Naive thymus-derived CD8-positive, alpha-beta T cell (primary cell): ENCODE measurements at regions of chr16 and their contacts with region 1.

Region 1: DNA sequence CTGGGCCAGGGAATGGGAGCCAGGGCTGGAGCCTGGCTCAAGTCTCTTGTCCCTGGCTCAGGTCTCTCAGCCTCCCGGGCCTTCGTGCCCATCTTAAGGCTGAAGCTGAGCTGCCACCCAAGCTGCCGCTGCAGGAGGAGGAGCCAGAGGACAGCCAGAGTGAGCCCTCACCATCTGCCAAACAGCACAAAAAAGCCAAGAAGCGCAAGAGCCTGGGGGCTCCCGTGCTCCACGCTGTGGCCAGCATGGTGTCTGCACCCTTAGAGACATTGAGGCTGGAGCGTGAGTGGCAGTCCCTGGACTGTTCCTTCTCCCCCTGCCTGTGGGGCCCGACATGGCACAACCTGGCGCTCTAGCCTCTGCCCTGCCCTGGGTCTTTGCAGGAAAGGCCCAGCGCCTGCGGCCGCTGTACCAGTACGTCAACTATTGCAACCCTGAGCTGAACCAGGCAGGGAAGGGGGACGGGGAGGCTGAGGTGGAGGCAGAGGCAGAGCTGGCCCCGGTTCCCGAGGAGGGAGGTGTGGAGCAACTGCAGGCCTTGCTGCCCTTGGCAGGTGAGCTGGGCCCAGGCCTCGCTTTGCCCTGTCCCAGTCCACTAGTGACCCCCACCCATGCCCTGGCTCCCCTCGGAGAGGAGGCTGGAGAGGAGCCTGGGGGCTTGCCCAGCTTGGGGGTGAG is 1.3 kb downstream of the C16orf86 start:
- DNase-seq: peak; percentile 65 to 91 (median 84)
- ATAC-seq: peak; percentile 89 to 92
- H3K4me3 Mint-ChIP-seq: peak overlapping the region; percentile 53 to 95 (median 84)
- H3K27ac Mint-ChIP-seq: peak overlapping the region in 6 of 10 donors; percentile 61 to 90 (median 79)
- H3K4me1 Mint-ChIP-seq: peaks cover 9 to 30% (median 27%) of the 10 kb centered on the region in 4 donors
- H3K27me3 Mint-ChIP-seq: no peaks in the 10 kb centered on the region

Region 2: GRCh38 chr16:67521095-67521804 is 146.7 kb before region 1 on chr16:
- POLR2A ChIA-PET with region 1: interaction called, 19 read pairs
- DNase-seq: peak; percentile 90 to 98 (median 94)
- ATAC-seq: peak; percentile 88 to 90
- H3K4me3 Mint-ChIP-seq: peak overlapping the region; percentile 86 to 96 (median 92)
- H3K27ac Mint-ChIP-seq: peak overlapping the region; percentile 84 to 99 (median 97)
- H3K4me1 Mint-ChIP-seq: peaks cover 22 to 52% (median 46%) of the 10 kb centered on the region in 4 donors
- H3K27me3 Mint-ChIP-seq: no peaks in the 10 kb centered on the region

Region 3: GRCh38 chr16:67530013-67530939 is 137.7 kb before region 1 on chr16:
- POLR2A ChIA-PET with region 1: interaction called, 12 read pairs
- DNase-seq: peak in 6 of 10 donors; percentile 14 to 78 (median 34)
- ATAC-seq: peak; percentile 48 to 63
- H3K4me3 Mint-ChIP-seq: peak overlapping the region; percentile 65 to 89 (median 84)
- H3K27ac Mint-ChIP-seq: peak overlapping the region in 7 of 10 donors; percentile 14 to 83 (median 81)
- H3K4me1 Mint-ChIP-seq: peaks cover 21 to 44% (median 30%) of the 10 kb centered on the region in 4 donors
- H3K27me3 Mint-ChIP-seq: peaks cover 0 to 24% (median 6%) of the 10 kb centered on the region in 5 donors

Region 4: DNA sequence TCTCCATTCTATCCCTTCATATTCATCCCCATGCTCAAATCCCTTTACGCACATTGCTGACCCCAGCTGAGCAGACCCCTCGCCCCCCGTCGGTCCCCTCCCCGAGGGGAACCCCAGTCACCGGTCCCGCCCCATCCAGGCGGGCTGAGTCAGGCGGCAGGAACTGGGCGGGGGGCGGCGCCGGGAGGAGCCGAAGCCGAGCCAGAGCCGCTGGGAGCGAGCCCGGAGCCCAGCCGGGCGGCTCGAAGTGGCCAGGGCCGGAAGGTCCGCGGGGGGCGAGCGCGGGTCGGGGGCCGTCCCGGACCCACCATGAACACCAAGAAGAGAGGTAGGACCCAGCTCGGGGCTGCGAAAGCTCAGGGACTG is 130.7 kb before region 1 on chr16:
- POLR2A ChIA-PET with region 1: interaction called, 17 read pairs
- DNase-seq: peak in 5 of 10 donors; percentile 36 to 54 (median 40)
- ATAC-seq: peak; percentile 44 to 47
- H3K4me3 Mint-ChIP-seq: peak overlapping the region; percentile 74 to 91 (median 85)
- H3K27ac Mint-ChIP-seq: peak overlapping the region; percentile 52 to 92 (median 84)
- H3K4me1 Mint-ChIP-seq: peaks cover 36 to 64% (median 46%) of the 10 kb centered on the region in 4 donors
- H3K27me3 Mint-ChIP-seq: no peaks in the 10 kb centered on the region

Region 5: DNA sequence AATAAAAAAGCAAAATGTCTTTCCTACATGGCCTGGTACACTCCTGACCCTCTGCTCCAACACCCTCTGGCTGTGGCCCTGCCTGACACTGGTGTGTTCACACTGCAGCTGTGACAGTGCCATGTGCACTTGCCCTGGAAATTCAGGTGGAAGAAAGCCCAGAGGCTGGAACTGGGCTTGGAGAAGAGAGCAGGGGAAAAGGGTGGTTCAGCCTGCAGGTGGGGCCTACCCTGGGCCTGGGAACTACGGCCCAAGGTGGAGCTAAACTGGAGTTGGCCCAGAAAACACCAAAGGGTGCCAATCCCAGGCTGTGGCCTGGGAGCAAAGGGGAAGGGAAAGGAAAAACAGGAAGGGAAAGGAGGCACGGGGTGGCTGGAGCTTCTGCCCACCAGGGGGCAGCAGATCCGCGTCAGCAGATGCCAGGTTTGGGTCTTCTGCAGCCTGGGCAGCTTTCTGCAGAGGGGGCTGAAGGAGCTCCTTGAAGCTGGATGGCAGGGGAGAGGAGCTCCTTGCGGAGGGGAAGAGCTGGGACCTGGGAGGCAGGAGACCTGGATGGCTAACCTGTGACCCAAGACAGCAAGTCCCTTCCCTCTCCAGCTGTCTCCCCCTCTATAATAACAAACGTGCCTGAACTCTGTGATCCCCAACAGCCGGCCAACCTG is 121.1 kb before region 1 on chr16:
- POLR2A ChIA-PET with region 1: interaction called, 41 read pairs
- DNase-seq: peak; percentile 58 to 88 (median 74)
- ATAC-seq: peak; percentile 36 to 57
- H3K4me3 Mint-ChIP-seq: peak overlapping the region; percentile 70 to 90 (median 84)
- H3K27ac Mint-ChIP-seq: peak overlapping the region; percentile 81 to 99 (median 96)
- H3K4me1 Mint-ChIP-seq: peaks cover 34 to 71% (median 60%) of the 10 kb centered on the region in 4 donors
- H3K27me3 Mint-ChIP-seq: no peaks in the 10 kb centered on the region

Region 6: DNA sequence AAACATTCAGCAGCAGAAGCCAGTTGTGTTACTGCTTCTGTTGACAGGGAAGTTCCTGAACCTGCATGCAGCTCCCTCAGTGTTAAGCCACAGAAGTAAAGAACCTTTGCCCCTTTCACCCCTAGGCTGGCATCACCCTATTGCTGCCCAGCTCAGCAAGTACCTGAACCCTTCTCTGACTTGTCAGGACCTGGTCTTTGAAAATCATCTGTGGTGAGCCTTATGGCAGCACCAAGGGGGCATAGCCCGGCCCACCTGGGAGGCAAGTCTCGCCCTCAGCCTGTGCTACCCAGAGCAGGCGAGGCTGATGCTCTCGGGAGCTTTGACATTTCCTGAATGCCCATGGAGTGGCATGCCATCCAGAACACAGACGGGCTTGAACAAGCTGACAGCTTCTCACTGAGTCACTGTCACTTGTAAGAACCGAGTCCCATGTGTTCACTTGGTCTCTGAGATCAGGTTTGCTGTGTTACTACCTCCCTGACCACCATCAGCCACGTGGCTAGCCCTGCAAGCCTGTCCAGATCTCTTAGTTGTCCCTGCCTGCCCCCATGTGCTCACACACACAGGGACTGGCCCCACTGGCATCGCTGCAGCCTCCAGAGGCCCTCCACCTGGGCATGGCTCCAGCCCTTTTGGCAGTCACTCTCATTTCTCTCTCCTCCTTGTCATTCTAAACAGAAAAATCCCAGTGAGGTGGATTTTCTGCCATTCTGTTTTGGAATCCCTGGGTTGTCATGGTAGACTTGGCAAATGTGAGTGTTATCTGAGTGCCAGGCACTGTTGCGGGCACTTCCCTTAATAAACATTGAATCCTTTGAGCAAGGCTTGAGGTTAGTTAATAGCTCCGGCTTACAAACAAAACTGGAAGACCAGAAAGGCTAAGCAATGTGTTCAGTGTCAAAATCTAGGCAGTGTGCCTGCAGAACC is 25.9 kb before region 1 on chr16:
- POLR2A ChIA-PET with region 1: interaction called, 36 read pairs
- DNase-seq: no peak
- ATAC-seq: no peak
- H3K4me3 Mint-ChIP-seq: no peak overlapping the region
- H3K27ac Mint-ChIP-seq: peak overlapping the region in 2 of 10 donors; percentile 4 to 53
- H3K4me1 Mint-ChIP-seq: peaks cover 4 to 21% (median 16%) of the 10 kb centered on the region in 4 donors
- H3K27me3 Mint-ChIP-seq: no peaks in the 10 kb centered on the region

Region 7: DNA sequence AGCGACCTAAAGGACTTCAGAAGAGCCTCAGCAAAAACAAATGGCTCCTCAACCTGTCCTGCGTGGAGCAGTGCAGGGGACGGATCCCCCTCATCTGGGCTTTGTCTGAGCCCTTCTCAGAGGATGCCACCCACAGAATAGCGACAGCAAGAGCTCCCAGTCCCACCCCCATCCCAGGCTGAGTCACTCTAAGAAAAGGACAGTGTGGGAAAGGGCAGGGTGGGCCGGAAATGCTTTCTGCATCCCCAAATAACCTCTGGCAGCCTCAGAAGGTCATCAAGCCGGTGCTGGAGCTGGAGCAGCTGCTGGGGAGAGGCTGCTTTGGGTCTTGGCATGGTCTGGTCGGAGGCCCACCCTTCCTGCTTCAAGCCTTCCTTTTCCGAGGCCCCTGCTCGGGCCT is 291.6 kb after region 1 on chr16:
- POLR2A ChIA-PET with region 1: no interaction called
- DNase-seq: no peak
- ATAC-seq: no peak
- H3K4me3 Mint-ChIP-seq: no peak overlapping the region
- H3K27ac Mint-ChIP-seq: no peak overlapping the region
- H3K4me1 Mint-ChIP-seq: peaks cover 0 to 5% (median 0%) of the 10 kb centered on the region in 4 donors
- H3K27me3 Mint-ChIP-seq: no peaks in the 10 kb centered on the region